GM18951 (cell line): ENCODE measurements at regions of chr9 and their contacts with region 1.

Region 1: DNA sequence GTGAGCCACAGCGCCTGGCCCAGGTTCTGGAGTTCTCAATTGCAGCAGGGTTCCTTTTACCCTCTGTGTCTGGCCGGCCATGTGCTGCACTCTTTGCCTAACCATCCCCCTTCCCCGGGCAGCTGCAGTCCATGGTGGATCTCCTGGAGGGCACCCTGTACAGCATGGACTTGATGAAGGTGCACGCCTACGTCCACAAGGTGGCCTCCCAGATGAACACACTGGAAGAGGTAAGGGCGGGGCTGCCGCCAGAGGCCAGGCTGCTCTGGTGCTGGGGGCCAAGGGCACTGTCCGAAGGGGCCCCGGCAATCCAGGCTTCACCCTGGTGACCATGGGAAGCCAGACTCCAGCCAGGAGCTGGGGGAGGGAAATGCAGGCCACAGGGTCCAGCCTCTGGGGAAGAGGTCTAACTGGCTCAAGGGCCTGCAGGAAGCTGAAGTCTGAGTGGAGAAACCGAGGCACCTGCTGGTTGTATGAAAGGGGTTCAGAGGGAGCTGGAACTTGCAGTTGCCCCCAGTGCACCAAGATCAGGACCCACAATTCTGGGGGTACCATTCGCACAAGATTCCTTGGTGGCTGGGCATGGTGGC is 18.1 kb downstream of the OLFML2A start:
- POLR2A ChIP-seq: no peak

Region 2: GRCh38 chr9:124839612-124840299 is 44.8 kb after region 1 on chr9:
- in situ Hi-C with region 1: loop called (anchors 10 kb)
- POLR2A ChIP-seq: no peak